ENCODE measurements at regions of chr17 and their contacts with region 1.

Region 1: DNA sequence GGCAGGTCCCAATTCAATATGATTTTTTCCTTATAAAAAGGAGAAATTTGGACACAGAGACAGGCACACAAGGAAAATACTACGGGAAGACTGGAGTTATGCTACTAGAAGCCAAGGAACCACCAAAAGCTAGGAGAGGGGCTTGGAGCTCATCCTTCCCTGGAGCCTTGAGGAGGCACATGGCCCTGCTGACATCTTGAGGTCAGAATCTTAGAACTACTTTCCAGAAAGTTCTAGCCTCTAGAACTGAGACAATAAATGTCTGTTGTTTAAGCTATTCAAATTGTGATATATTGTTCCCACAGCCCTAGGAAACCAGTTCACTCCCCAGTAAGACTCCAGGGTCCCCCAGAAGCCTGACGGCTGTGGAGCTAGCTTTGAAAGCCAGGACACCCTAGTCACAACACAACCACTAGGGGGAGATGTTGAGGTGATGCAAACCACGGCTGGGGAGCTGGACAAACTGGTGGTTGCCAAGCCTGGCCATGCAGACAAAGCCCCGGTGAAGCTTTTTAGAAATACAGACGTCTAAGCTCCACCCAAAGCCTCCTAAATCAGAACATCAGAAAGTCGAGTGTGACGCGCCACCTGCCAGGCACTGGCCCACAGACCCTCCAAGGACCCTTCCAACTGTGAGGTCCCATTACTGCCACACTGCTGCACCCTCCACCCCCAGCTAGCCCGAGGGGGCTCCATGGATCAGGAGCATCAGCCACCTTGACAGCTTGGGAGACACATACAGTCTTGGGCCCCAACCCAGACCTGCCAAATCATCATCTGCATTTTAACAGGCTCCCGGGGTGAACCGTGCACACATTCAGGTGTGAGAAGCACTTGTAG is 106.4 kb downstream of the SLC39A11 start:
- DNase-seq: peak; percentile 80
- ATAC-seq: peak; percentile 80
- H3K4me3 ChIP-seq: no peak overlapping the region
- H3K27ac ChIP-seq: no peak overlapping the region
- H3K4me1 ChIP-seq: peaks cover 15% of the 10 kb centered on the region
- H3K27me3 ChIP-seq: no peaks in the 10 kb centered on the region
- CTCF ChIP-seq: peak; percentile 84
- POLR2A ChIP-seq: no peak
- RAD21 ChIP-seq: peak; percentile 85

Region 2: DNA sequence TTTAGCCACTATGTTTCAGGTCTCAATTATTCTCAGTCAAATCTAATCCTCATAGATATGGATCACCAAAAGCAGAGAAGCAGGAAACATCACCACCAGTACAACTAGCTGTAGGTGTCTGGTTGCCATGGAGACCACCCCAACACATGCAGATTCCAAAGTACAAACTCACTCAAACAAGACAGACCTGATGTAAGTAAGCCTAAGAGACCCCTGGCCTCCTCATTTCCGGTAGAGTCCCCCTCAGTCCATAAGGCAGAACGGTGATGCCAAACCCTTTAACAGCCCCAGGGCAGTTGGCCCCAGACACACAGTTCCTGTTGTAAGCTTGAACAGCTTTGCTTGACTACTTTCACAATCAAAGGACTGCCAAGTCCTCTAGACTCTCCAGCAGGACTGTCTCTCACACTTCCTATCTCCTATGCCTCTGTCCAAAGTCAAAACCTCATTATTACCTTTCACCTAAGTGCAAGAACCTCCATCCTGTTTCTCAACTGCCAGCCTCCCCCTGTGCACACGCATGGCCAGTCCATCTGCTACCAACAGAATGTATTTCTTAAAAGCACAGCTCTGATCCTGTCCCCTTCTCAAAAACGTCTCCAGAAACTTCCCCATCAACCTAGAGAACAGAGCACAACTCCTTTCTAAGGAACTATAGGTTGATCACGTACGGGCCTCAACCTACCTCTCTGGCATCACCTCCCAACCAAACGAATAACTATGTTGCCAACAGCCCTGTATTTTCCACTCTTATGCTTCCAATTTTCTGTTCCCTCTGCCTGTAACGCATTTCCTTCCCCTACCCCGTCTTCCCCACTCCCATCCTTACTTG is 82.4 kb after region 1 on chr17:
- CTCF ChIA-PET with region 1: interaction called, 4 read pairs
- POLR2A ChIA-PET with region 1: no interaction called
- dilution Hi-C with region 1: no loop called
- in situ Hi-C with region 1: no loop called
- intact Hi-C with region 1: loop called (anchors 5 kb)
- DNase-seq: peak; percentile 92
- ATAC-seq: peak; percentile 22
- H3K4me3 ChIP-seq: no peak overlapping the region
- H3K27ac ChIP-seq: peak overlapping the region; percentile 89
- H3K4me1 ChIP-seq: peaks cover 43% of the 10 kb centered on the region
- H3K27me3 ChIP-seq: no peaks in the 10 kb centered on the region
- CTCF ChIP-seq: no peak
- POLR2A ChIP-seq: no peak
- RAD21 ChIP-seq: no peak

Region 3: GRCh38 chr17:73156166-73156840 is 170.2 kb after region 1 on chr17:
- CTCF ChIA-PET with region 1: interaction called, 24 read pairs
- POLR2A ChIA-PET with region 1: no interaction called
- dilution Hi-C with region 1: no loop called
- in situ Hi-C with region 1: loop called (anchors 5 kb)
- intact Hi-C with region 1: loop called (anchors 1 kb)
- DNase-seq: peak; percentile 68
- ATAC-seq: peak; percentile 100
- H3K4me3 ChIP-seq: no peak overlapping the region
- H3K27ac ChIP-seq: no peak overlapping the region
- H3K4me1 ChIP-seq: peaks cover 3% of the 10 kb centered on the region; the same call in 1 of the 2 replicates
- H3K27me3 ChIP-seq: peaks cover 18% of the 10 kb centered on the region
- CTCF ChIP-seq: peak; percentile 81
- POLR2A ChIP-seq: no peak
- RAD21 ChIP-seq: peak; percentile 79

Region 4: DNA sequence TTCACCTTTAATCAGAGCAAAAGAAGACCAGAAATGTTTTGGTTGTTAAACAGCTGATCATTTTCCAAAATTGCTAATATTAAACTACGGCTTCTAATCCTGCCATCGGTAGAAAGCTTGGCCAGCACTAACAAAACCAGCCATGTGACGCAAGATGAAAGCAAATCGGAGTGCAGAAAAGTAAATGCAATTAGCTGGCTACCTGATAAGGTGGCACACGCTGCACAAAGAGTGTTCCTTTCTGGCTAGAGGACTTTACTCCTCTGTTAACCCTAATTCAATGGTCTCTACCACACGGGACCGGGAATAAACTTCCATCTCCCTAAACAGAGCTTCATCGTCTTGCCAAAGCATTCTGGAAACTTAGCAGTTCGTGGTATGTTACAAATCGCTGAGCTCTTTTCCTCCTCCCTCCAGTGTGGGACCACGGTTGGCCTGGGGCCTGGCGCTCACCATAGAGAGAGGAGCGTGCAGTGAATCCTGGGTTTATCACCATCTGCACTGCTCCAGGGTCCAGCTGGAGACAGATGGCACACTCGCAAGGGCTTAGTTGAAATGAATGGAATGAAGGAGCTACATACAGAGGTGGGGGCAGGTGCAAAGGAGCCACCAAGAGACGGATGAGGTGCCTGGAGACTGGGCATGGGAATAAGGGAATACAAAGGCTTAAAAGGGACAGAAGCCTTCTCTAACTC is 196.7 kb after region 1 on chr17:
- CTCF ChIA-PET with region 1: interaction called, 12 read pairs
- POLR2A ChIA-PET with region 1: no interaction called
- dilution Hi-C with region 1: no loop called
- in situ Hi-C with region 1: loop called (anchors 5 kb)
- intact Hi-C with region 1: no loop called
- DNase-seq: no peak
- ATAC-seq: no peak
- H3K4me3 ChIP-seq: no peak overlapping the region
- H3K27ac ChIP-seq: no peak overlapping the region
- H3K4me1 ChIP-seq: peaks cover 2% of the 10 kb centered on the region; the same call in 1 of the 2 replicates
- H3K27me3 ChIP-seq: no peaks in the 10 kb centered on the region
- CTCF ChIP-seq: no peak
- POLR2A ChIP-seq: no peak
- RAD21 ChIP-seq: no peak

Region 5: DNA sequence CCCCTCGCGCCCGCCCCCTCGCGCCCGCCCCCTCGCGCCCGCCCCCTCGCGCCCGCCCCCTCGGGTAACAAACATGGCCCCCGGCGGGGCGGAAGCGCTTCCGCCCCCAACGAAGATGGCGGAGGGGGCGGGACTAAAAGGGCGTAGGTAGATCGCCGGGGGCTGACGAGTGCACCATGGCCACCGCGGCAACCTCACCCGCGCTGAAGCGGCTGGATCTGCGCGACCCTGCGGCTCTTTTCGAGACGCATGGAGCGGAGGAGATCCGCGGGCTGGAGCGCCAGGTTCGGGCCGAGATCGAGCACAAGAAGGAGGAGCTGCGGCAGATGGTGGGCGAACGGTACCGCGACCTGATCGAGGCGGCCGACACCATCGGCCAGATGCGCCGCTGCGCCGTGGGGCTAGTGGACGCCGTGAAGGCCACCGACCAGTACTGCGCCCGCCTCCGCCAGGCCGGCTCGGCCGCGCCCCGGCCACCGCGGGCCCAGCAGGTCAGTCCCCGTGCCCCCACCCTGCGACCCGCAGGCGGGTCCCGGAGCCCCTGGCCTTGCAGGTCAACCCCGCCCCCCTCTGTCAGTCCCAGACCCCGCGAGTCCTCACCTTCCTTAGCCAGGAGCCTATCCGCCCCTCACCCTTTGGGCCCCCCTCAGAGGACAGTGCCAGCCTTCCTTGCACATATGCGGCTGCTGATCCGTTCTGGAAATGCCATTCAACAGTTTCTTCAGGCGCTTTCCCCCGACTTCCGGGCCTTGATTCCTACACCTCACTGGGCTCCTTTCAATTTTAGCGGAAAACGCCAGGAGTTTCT is 207.0 kb after region 1 on chr17 and contains the start of gene COG1:
- CTCF ChIA-PET with region 1: interaction called, 12 read pairs
- POLR2A ChIA-PET with region 1: no interaction called
- dilution Hi-C with region 1: no loop called
- in situ Hi-C with region 1: loop called (anchors 5 kb)
- intact Hi-C with region 1: loop called (anchors 2 kb)
- DNase-seq: peak; percentile 84
- ATAC-seq: peak; percentile 89
- H3K4me3 ChIP-seq: peak within 1 kb of the TSS; percentile 99
- H3K27ac ChIP-seq: peak within 1 kb of the TSS; percentile 93
- H3K4me1 ChIP-seq: peaks cover 5% of the 10 kb centered on the region
- H3K27me3 ChIP-seq: no peaks in the 10 kb centered on the region
- CTCF ChIP-seq: 0 out of 2 replicates have a peak, but pooled peaks have one; percentile 4
- POLR2A ChIP-seq: peak; percentile 88
- RAD21 ChIP-seq: no peak
- total RNA-seq, gene COG1: 14.4 and 18.3 TPM in 2 replicates

Measured in IMR-90 (cell line).